ENCODE measurements at regions of chr5 and their contacts with region 1.

Region 1: GRCh38 chr5:139560752-139561654 is at the start of gene UBE2D2:
- DNase-seq: peak; percentile 99
- ATAC-seq: peak; percentile 89
- H3K4me3 Mint-ChIP-seq: peak within 1 kb of the TSS; percentile 99
- H3K27ac Mint-ChIP-seq: peak within 1 kb of the TSS; percentile 99
- H3K4me1 Mint-ChIP-seq: peaks cover 27% of the 10 kb centered on the region
- H3K27me3 Mint-ChIP-seq: no peaks in the 10 kb centered on the region
- total RNA-seq, gene UBE2D2: 262 to 289 TPM

Region 2: GRCh38 chr5:138178516-138179276 is 1382.3 kb before region 1 on chr5 and contains the starts of genes BRD8 and KIF20A:
- CTCF ChIA-PET with region 1: no interaction called
- POLR2A ChIA-PET with region 1: no interaction called
- intact Hi-C with region 1: loop called in 1 of 2 experiments (anchors 5 kb)
- DNase-seq: peak; percentile 96
- ATAC-seq: peak; percentile 93
- H3K4me3 Mint-ChIP-seq: no peak within 1 kb of the TSS
- H3K27ac Mint-ChIP-seq: peak within 1 kb of the TSS; percentile 73
- H3K4me1 Mint-ChIP-seq: peaks cover 16% of the 10 kb centered on the region
- H3K27me3 Mint-ChIP-seq: no peaks in the 10 kb centered on the region
- total RNA-seq, gene BRD8: 60.7 to 61.4 TPM
- total RNA-seq, gene KIF20A: 66.6 to 76.3 TPM

Region 3: DNA sequence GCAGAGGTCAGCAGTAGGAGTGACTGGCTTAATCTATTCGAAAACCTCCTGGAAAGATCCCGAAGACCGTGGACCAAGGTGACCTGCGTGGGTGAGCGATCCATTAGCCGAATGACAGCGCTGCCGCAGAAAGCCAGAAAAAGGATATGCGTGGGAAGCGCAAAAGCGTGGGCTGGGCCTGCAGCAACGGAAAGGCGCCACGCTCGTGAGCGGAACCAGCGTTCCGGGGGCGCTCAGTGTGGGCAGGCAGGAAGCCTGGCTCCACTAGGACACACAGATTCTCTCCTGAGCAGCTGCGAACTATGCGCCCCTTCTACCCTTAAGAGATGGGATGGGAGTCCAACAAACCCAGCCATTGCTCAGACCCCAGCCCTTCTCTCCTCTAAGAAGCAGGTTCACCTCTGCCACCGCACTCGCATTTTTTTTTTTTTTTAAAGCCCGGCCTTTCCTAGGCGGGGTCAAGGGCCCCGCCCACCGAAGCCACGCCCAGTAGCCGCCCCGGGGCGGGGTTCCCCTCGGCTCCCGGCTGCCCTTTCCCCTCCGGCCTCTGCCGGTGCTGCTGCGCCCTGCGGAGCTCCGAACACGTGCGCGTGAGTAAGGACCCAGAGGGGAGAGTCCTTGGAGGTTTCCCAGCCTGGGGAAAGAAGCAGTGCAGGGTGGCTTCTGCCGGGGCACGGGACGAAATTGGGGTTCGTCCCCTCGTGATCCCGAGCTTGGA is 287.3 kb before region 1 on chr5:
- CTCF ChIA-PET with region 1: no interaction called
- POLR2A ChIA-PET with region 1: no interaction called
- intact Hi-C with region 1: loop called in 1 of 2 experiments (anchors 2 kb)
- DNase-seq: peak; percentile 95
- ATAC-seq: peak; percentile 90
- H3K4me3 Mint-ChIP-seq: peak overlapping the region; percentile 95
- H3K27ac Mint-ChIP-seq: peak overlapping the region; percentile 88
- H3K4me1 Mint-ChIP-seq: peaks cover 54% of the 10 kb centered on the region
- H3K27me3 Mint-ChIP-seq: no peaks in the 10 kb centered on the region

Region 4: DNA sequence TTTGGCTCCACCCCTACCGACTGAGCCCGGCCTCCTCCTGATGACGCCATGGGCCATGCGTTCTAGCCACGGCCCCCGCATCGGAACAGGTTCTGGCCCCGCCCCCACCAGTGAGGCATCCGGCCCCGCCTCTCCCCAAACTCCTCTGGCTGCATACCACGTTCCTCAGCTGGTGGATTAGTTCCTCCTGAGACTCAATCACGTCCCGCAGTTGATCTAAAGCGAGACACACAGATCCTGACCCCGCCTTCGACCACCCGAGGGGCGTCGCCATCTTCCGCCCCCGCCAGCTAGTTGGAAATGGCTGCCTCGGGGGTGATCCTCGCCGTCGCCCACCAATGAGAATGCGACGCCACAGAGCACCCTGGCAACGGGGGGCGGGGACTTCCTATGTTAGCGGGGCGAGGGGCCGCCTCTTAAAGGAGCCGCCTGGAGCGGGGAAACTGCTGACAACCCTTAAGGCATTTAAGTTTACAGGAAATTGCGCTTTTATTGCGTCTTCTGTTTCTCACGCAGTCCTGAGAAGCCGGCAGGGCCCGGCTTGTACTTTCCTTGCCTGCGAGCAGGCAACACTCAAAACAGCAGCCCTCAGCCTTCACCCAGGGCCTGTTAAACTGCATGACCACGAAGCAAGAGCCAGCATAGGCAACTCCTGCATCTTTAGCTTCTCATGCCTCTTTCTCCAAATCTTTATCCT is 157.1 kb before region 1 on chr5 and contains the start of gene SPATA24:
- CTCF ChIA-PET with region 1: no interaction called
- POLR2A ChIA-PET with region 1: interaction called, 3 read pairs
- intact Hi-C with region 1: loop called (anchors 1 kb)
- DNase-seq: peak; percentile 100
- ATAC-seq: peak; percentile 93
- H3K4me3 Mint-ChIP-seq: peak within 1 kb of the TSS; percentile 79
- H3K27ac Mint-ChIP-seq: peak within 1 kb of the TSS; percentile 99
- H3K4me1 Mint-ChIP-seq: peaks cover 37% of the 10 kb centered on the region
- H3K27me3 Mint-ChIP-seq: no peaks in the 10 kb centered on the region
- total RNA-seq, gene SPATA24: 4.6 to 5.9 TPM

Region 5: DNA sequence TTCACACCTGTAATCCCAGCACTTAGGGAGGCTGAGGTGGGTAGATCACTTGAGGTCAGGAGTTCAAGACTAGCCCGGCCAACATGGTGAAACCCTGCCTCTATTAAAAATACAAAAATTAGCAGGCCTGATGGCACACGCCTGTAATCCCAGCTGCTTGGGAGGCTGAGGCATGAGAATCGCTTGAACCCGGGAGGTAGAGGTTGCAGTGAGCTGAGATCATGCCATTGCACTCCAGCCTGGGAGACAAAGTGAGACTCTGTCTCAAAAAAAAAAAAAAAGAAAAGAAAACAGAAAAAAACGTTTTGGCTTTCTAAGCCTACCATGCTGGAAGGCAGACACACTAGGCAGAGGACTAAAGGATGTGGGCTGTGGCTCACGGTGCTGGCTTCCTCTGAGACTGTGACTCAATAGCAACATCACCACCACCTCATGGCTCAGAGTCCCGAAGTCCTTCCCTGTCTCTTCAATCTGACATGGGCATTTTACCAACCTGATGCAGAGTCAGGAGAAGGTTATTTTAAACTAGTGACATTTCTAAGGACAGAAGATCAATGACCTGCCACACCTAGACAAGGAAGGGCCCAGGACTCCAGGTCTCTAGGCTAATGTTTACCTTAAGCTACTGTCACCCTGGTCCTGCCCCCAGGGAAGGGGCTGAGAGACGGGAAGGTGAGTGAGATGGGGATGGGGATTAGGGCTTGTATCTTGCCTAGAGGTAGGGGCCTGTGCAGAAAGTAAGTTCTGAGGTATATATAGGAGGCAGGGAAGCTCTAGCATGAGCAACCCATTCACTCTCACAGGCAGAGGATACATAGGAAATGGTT is 102.2 kb before region 1 on chr5:
- CTCF ChIA-PET with region 1: no interaction called
- POLR2A ChIA-PET with region 1: no interaction called
- intact Hi-C with region 1: loop called in 1 of 2 experiments (anchors 5 kb)
- DNase-seq: peak; percentile 90
- ATAC-seq: peak; percentile 91
- H3K4me3 Mint-ChIP-seq: peak overlapping the region; percentile 57
- H3K27ac Mint-ChIP-seq: peak overlapping the region; percentile 94
- H3K4me1 Mint-ChIP-seq: peaks cover 64% of the 10 kb centered on the region
- H3K27me3 Mint-ChIP-seq: no peaks in the 10 kb centered on the region

Region 6: GRCh38 chr5:139593716-139594319 is 32.8 kb after region 1 on chr5:
- CTCF ChIA-PET with region 1: interaction called, 4 read pairs
- POLR2A ChIA-PET with region 1: interaction called, 3 read pairs
- intact Hi-C with region 1: loop called in 1 of 2 experiments (anchors 5 kb)
- DNase-seq: peak; percentile 28
- ATAC-seq: peak; percentile 62
- H3K4me3 Mint-ChIP-seq: no peak overlapping the region
- H3K27ac Mint-ChIP-seq: no peak overlapping the region
- H3K4me1 Mint-ChIP-seq: peaks cover 41% of the 10 kb centered on the region
- H3K27me3 Mint-ChIP-seq: no peaks in the 10 kb centered on the region

Region 7: GRCh38 chr5:140401362-140402257 is 840.6 kb after region 1 on chr5 and contains the start of gene ANKHD1:
- CTCF ChIA-PET with region 1: no interaction called
- POLR2A ChIA-PET with region 1: no interaction called
- intact Hi-C with region 1: loop called in 1 of 2 experiments (anchors 5 kb)
- DNase-seq: peak; percentile 98
- ATAC-seq: peak; percentile 83
- H3K4me3 Mint-ChIP-seq: no peak within 1 kb of the TSS
- H3K27ac Mint-ChIP-seq: peak within 1 kb of the TSS; percentile 87
- H3K4me1 Mint-ChIP-seq: peaks cover 24% of the 10 kb centered on the region
- H3K27me3 Mint-ChIP-seq: no peaks in the 10 kb centered on the region
- total RNA-seq, gene ANKHD1: 77.1 to 93.5 TPM